Heart left ventricle (tissue), 16 donors: ENCODE measurements at regions of chr1 and their contacts with region 1.

Region 1: GRCh38 chr1:198265073-198265661 is 108.4 kb downstream of the NEK7 start:
- DNase-seq: peak in 4 of 5 donors; percentile 38 to 56 (median 52)
- ATAC-seq: peak; percentile 95 to 97 (median 96)
- H3K4me3 ChIP-seq: no peak overlapping the region
- H3K27ac ChIP-seq: peak overlapping the region; percentile 46 to 87 (median 78)
- H3K4me1 ChIP-seq: peaks cover 0 to 76% (median 37%) of the 10 kb centered on the region in 12 donors
- H3K27me3 ChIP-seq: no peaks in the 10 kb centered on the region
- CTCF ChIP-seq: no peak
- POLR2A ChIP-seq: no peak

Region 2: GRCh38 chr1:198141668-198142351 is 123.4 kb before region 1 on chr1:
- intact Hi-C with region 1: no loop called
- DNase-seq: no peak
- ATAC-seq: no peak
- H3K4me3 ChIP-seq: no peak overlapping the region
- H3K27ac ChIP-seq: no peak overlapping the region
- H3K4me1 ChIP-seq: no peaks in the 10 kb centered on the region
- H3K27me3 ChIP-seq: no peaks in the 10 kb centered on the region
- CTCF ChIP-seq: no peak
- POLR2A ChIP-seq: no peak

Region 3: GRCh38 chr1:198167436-198167934 is 97.7 kb before region 1 on chr1:
- intact Hi-C with region 1: loop called in 2 of 10 experiments (anchors 5 to 10 kb)
- DNase-seq: peak in 2 of 5 donors; percentile 23 to 38
- ATAC-seq: peak; percentile 48 to 86 (median 72)
- H3K4me3 ChIP-seq: no peak overlapping the region
- H3K27ac ChIP-seq: peak overlapping the region; percentile 6 to 78 (median 62)
- H3K4me1 ChIP-seq: peaks cover 12 to 97% (median 78%) of the 10 kb centered on the region in 12 donors
- H3K27me3 ChIP-seq: no peaks in the 10 kb centered on the region
- CTCF ChIP-seq: no peak
- POLR2A ChIP-seq: no peak

Region 4: DNA sequence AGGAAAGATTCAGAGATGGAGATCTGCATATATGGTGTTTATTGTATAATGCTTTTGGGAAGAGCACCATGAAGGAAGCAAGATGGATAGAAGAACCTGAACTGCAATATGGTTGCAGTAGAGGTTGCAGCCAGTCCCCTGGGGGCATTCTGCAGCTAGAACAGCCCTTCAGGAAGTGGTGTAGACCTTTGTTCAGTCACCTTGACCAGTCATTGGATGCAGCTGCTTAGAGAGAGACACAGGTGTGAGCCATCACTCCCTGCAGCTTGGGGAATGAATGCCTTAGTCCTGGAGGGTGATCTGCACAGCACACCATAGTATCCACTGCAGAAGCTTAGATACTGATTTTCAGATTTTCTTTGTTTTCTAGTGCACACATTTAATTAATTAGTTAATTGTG is 66.1 kb before region 1 on chr1:
- intact Hi-C with region 1: loop called in 1 of 10 experiments (anchors 10 kb)
- DNase-seq: no peak
- ATAC-seq: no peak
- H3K4me3 ChIP-seq: no peak overlapping the region
- H3K27ac ChIP-seq: no peak overlapping the region
- H3K4me1 ChIP-seq: peaks cover 0 to 82% (median 43%) of the 10 kb centered on the region in 12 donors
- H3K27me3 ChIP-seq: no peaks in the 10 kb centered on the region
- CTCF ChIP-seq: no peak
- POLR2A ChIP-seq: no peak

Region 5: GRCh38 chr1:198234520-198235251 is 30.5 kb before region 1 on chr1:
- intact Hi-C with region 1: no loop called
- DNase-seq: no peak
- ATAC-seq: peak in 3 of 4 donors; percentile 33 to 38 (median 34)
- H3K4me3 ChIP-seq: peak overlapping the region in 6 of 12 donors; percentile 2 to 34 (median 28)
- H3K27ac ChIP-seq: peak overlapping the region in 6 of 12 donors; percentile 10 to 53 (median 20)
- H3K4me1 ChIP-seq: peaks cover 0 to 52% (median 24%) of the 10 kb centered on the region in 12 donors
- H3K27me3 ChIP-seq: no peaks in the 10 kb centered on the region
- CTCF ChIP-seq: no peak
- POLR2A ChIP-seq: no peak